ENCODE measurements at regions of chr6 and their contacts with region 1.

Region 1: GRCh38 chr6:36678518-36679027 is at the start of gene CDKN1A:
- DNase-seq: peak; percentile 94
- H3K4me3 ChIP-seq: peak within 1 kb of the TSS; percentile 51 to 81 (median 73)
- H3K27ac ChIP-seq: peak within 1 kb of the TSS; percentile 88
- H3K4me1 ChIP-seq: peaks cover 37% of the 10 kb centered on the region
- H3K27me3 ChIP-seq: no peaks in the 10 kb centered on the region
- CTCF ChIP-seq: no peak
- POLR2A ChIP-seq: peak; percentile 100
- total RNA-seq, gene CDKN1A: 170 and 199 TPM in 2 replicates

Region 2: DNA sequence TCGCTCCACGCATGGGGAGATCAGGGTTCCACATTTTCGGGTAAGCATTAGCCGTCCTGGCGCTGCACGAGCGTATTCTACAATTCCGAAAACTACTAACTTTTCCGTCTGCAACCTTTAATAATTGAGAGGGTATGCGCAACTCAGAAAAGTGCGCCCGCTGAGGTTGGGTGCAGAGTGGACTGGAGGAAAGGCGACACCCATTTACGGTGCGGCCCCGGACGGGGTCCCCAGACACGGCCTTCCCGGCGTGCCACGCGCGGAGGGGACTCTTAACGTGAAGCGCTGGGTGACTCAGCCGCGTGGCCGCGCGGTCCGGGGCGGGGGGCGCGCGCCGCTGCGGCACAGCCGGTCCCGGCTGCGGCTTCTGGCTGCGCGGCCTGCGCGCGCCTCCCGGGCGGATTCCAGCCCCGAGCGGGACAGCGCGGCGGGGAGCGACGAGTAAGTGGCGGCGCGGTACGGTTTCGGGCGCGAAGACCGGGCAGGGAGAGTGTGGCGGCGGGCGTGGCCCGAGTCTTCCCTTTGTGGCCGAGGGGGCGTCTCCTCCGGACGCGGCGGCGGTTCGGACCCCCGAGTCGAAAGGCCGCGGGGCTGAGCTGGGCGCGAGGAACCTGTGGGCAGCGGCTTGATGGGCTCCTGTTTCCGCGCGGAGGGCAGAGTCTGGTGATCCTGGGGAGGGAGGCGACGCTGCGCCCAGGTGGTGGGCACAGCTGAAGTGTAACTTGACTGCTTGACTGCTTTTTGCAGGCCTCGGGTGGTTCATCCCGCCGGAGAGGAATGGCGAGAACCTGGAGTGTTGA is 235.7 kb before region 1 on chr6 and contains the starts of genes KCTD20 and PXT1:
- CTCF ChIA-PET with region 1: no interaction called
- POLR2A ChIA-PET with region 1: no interaction called
- dilution Hi-C with region 1: no loop called
- intact Hi-C with region 1: loop called (anchors 2 kb)
- DNase-seq: peak; percentile 81
- H3K4me3 ChIP-seq: peak within 1 kb of the TSS; percentile 78 to 96 (median 91)
- H3K27ac ChIP-seq: peak within 1 kb of the TSS; percentile 95
- H3K4me1 ChIP-seq: peaks cover 36% of the 10 kb centered on the region
- H3K27me3 ChIP-seq: no peaks in the 10 kb centered on the region
- CTCF ChIP-seq: no peak
- POLR2A ChIP-seq: peak; percentile 95
- total RNA-seq, gene KCTD20: 47.2 and 49.2 TPM in 2 replicates
- total RNA-seq, gene PXT1: not detected in 2 replicates

Region 3: DNA sequence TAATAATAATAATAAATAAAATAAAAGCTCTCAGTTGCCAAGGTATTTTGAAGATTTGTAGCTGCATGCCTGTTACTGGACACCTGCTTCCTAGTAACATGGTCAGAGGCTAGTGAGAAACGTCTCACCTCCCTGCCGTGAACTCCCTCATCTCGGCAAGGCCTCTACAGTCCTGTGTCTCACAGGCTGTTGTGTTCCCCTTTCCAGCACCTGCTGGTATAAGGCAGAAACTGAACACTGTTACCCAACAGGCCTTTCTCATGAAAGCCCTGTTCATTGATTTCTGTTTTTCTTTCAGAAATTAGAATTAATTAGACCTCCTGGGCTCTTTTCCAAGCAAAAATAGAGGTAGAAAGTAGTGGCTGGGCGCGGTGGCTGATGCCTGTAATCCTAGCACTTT is 102.0 kb before region 1 on chr6:
- CTCF ChIA-PET with region 1: no interaction called
- POLR2A ChIA-PET with region 1: no interaction called
- dilution Hi-C with region 1: no loop called
- intact Hi-C with region 1: no loop called
- DNase-seq: no peak
- H3K4me3 ChIP-seq: no peak overlapping the region
- H3K27ac ChIP-seq: no peak overlapping the region
- H3K4me1 ChIP-seq: no peaks in the 10 kb centered on the region
- H3K27me3 ChIP-seq: no peaks in the 10 kb centered on the region
- CTCF ChIP-seq: no peak
- POLR2A ChIP-seq: no peak

Region 4: DNA sequence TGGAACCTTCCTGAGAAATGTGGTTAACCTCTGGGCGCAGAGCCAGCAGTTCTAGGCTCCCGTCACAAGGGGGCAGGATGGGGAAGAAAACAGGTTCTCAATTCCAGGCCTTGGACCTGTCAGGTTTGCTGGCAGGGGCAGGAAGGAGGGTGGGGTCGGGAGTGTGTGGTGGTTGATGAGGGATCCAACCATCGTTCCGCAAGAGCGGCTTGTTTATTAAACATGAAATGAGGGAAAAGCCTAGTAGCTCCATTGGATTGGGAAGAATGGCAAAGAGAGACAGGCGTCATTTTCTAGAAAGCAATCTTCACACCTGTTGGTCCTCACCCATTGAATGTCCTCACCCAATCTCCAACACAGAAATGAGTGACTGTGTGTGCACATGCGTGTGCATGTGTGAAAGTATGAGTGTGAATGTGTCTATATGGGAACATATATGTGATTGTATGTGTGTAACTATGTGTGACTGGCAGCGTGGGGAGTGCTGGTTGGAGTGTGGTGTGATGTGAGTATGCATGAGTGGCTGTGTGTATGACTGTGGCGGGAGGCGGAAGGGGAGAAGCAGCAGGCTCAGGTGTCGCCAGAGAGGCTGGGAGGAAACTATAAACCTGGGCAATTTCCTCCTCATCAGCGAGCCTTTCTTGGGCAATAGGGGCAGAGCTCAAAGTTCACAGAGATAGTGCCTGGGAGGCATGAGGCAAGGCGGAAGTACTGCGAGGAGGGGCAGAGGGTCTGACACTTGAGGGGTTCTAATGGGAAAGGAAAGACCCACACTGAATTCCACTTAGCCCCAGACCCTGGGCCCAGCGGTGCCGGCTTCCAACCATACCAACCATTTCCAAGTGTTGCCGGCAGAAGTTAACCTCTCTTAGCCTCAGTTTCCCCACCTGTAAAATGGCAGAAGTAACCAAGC is 54.8 kb before region 1 on chr6:
- CTCF ChIA-PET with region 1: interaction called, 34 read pairs
- POLR2A ChIA-PET with region 1: interaction called, 11 read pairs
- dilution Hi-C with region 1: loop called (anchors 10 kb)
- intact Hi-C with region 1: loop called (anchors 1 kb)
- DNase-seq: peak; percentile 84
- H3K4me3 ChIP-seq: no peak overlapping the region
- H3K27ac ChIP-seq: no peak overlapping the region
- H3K4me1 ChIP-seq: peaks cover 7% of the 10 kb centered on the region
- H3K27me3 ChIP-seq: no peaks in the 10 kb centered on the region
- CTCF ChIP-seq: peak; percentile 84 to 87
- POLR2A ChIP-seq: no peak

Region 5: DNA sequence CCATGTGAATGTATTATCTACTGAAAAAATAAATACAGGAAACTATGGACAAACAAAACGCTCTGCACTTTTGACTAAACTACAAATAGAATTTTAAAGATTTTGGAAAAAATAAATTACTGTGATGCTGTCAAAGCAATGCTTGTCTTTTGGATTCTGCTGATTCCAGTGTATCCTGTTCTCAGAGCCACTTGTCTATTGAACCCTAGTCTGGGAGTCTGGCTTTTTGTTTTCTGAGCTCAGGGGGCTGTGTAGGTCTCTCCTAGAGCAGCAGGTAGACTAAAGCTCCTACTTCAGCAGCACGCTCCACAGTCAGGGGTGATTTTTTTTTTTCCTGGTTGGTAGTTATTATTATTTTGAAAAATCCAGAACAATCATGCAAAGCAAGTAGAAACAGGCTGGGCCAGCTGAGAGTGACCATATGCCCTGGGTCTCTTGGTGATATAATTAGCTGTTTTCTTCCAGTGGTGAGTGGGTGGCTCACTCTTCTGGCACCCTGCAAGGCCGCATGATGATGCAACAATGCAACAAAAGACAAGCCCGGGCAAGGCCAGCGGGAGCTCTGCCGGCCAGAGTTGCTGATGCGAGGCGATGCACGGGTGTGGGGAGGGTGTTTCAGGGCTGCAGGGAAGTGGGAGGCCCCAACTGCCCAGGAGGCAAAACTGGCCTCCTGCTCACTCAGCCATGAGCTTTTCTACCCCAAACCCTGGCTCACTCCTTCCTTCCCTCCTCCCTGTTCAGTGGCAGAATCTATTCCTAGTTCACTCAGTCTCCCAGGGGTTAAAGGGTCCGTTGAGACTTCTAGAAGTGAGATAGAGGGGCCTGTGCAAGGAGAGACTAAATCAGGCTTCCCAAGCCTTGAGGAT is 11.6 kb before region 1 on chr6:
- CTCF ChIA-PET with region 1: interaction called, 6 read pairs
- POLR2A ChIA-PET with region 1: interaction called, 11 read pairs
- dilution Hi-C with region 1: no loop called
- intact Hi-C with region 1: no loop called
- DNase-seq: peak; percentile 41
- H3K4me3 ChIP-seq: no peak overlapping the region
- H3K27ac ChIP-seq: no peak overlapping the region
- H3K4me1 ChIP-seq: no peaks in the 10 kb centered on the region
- H3K27me3 ChIP-seq: no peaks in the 10 kb centered on the region
- CTCF ChIP-seq: no peak
- POLR2A ChIP-seq: no peak

Region 6: GRCh38 chr6:36759148-36759759 is 80.7 kb after region 1 on chr6:
- CTCF ChIA-PET with region 1: interaction called, 23 read pairs
- POLR2A ChIA-PET with region 1: interaction called, 13 read pairs
- dilution Hi-C with region 1: no loop called
- intact Hi-C with region 1: loop called (anchors 1 kb)
- DNase-seq: peak; percentile 85
- H3K4me3 ChIP-seq: no peak overlapping the region
- H3K27ac ChIP-seq: no peak overlapping the region
- H3K4me1 ChIP-seq: peaks cover 33% of the 10 kb centered on the region
- H3K27me3 ChIP-seq: no peaks in the 10 kb centered on the region
- CTCF ChIP-seq: peak; percentile 91 to 97
- POLR2A ChIP-seq: no peak

Measured in endothelial cell of umbilical vein (primary cell).